ENCODE measurements at regions of chr17 and their contacts with region 1.

Region 1: GRCh38 chr17:39927101-39927928 is at the starts of genes LRRC3C and ORMDL3:
- DNase-seq: peak; percentile 98
- H3K4me3 Mint-ChIP-seq: peak within 1 kb of the TSS; percentile 88
- H3K27ac Mint-ChIP-seq: peak within 1 kb of the TSS; percentile 80
- H3K4me1 Mint-ChIP-seq: peaks cover 47% of the 10 kb centered on the region
- H3K27me3 Mint-ChIP-seq: no peaks in the 10 kb centered on the region
- total RNA-seq, gene LRRC3C: not detected in 2 replicates
- total RNA-seq, gene ORMDL3: 65.7 and 65.8 TPM in 2 replicates

Region 2: DNA sequence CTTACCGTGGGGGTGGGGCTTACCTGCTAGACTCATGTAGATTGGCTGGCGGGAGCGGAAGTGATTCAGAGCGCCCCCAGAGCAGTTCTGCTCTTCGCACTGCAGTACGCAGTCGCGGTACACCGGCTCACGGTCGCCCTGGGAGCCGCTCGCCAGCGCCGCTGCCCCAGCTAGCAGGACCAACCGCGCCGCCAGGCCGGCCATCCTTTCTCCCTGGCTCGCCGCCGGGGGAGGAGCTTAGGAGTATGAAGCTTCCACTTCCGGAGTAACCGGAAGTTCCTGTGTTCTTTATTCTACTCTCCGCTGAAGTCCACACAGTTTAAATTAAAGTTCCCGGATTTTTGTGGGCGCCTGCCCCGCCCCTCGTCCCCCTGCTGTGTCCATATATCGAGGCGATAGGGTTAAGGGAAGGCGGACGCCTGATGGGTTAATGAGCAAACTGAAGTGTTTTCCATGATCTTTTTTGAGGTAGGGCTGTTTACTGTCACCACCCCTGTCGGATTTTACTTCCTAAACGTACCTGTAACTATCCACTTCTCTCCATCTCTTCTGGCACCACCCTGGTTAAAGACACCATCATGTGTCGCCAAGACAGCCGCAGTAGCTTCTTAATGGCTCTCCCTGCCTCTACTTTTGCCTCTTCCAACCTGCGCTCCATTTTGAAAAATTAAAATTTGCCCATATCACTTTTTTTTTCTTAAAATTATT is 239.3 kb before region 1 on chr17 and contains the start of gene PGAP3:
- intact Hi-C with region 1: loop called (anchors 10 kb)
- DNase-seq: peak; percentile 94
- H3K4me3 Mint-ChIP-seq: peak within 1 kb of the TSS; percentile 95
- H3K27ac Mint-ChIP-seq: peak within 1 kb of the TSS; percentile 92
- H3K4me1 Mint-ChIP-seq: peaks cover 14% of the 10 kb centered on the region
- H3K27me3 Mint-ChIP-seq: no peaks in the 10 kb centered on the region
- total RNA-seq, gene PGAP3: 12.5 and 13.5 TPM in 2 replicates

Region 3: GRCh38 chr17:39794249-39794970 is 132.9 kb before region 1 on chr17:
- intact Hi-C with region 1: loop called (anchors 5 kb)
- DNase-seq: peak; percentile 75
- H3K4me3 Mint-ChIP-seq: peak overlapping the region; percentile 76
- H3K27ac Mint-ChIP-seq: peak overlapping the region; percentile 81
- H3K4me1 Mint-ChIP-seq: peaks cover 55% of the 10 kb centered on the region
- H3K27me3 Mint-ChIP-seq: no peaks in the 10 kb centered on the region

Region 4: DNA sequence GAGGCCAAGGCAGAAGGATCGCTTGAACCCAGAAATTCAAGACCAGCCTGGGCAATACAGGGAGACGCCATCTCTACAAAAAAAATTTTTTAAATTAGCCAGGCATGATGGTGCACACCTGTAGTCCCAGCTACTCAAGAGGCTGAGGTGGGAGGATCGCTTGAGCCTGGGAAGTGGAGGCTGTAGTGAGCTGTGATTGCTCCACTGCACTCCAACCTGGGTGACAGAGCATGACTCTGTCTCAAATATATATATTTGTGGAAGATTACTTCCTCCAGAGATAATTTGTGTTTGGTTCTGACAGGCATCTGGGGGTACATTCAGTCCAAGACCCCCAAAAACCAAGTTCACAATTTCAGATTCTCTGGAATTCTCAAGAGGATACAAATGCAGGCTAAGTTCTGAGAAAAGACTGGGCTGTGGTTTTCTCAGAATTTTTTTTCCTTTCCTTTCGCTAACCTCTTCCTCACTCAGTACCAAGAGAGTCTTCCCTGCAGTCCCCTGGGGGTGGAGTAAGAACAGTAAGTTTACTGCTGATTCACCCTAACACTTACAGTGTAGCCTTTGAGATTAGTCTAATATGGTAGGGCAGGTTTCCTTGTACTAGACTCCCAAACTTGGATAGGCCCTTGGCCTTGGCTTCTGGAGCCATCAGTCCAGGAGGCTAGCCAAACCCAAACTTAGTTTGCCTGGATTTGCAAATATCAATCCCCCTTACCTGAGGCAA is 24.0 kb before region 1 on chr17:
- intact Hi-C with region 1: loop called (anchors 2 kb)
- DNase-seq: peak; percentile 84
- H3K4me3 Mint-ChIP-seq: peak overlapping the region; percentile 73
- H3K27ac Mint-ChIP-seq: peak overlapping the region; percentile 66
- H3K4me1 Mint-ChIP-seq: peaks cover 34% of the 10 kb centered on the region
- H3K27me3 Mint-ChIP-seq: no peaks in the 10 kb centered on the region

Region 5: GRCh38 chr17:39980351-39981206 is 53.3 kb after region 1 on chr17 and contains the start of gene PSMD3:
- intact Hi-C with region 1: loop called (anchors 1 kb)
- DNase-seq: peak; percentile 99
- H3K4me3 Mint-ChIP-seq: peak within 1 kb of the TSS; percentile 91
- H3K27ac Mint-ChIP-seq: peak within 1 kb of the TSS; percentile 92
- H3K4me1 Mint-ChIP-seq: peaks cover 28% of the 10 kb centered on the region
- H3K27me3 Mint-ChIP-seq: peaks cover 8% of the 10 kb centered on the region
- total RNA-seq, gene PSMD3: 199 and 204 TPM in 2 replicates